ENCODE measurements at regions of chr7 and their contacts with region 1.

Region 1: GRCh38 chr7:883055-884021 is 7.0 kb downstream of the GET4 start:
- DNase-seq: peak; percentile 69
- ATAC-seq: peak; percentile 38

Region 2: GRCh38 chr7:964401-965231 is 81.3 kb after region 1 on chr7:
- intact Hi-C with region 1: loop called (anchors 5 kb)
- DNase-seq: no peak
- ATAC-seq: peak; percentile 64

Region 3: GRCh38 chr7:1028031-1028770 is 144.9 kb after region 1 on chr7:
- intact Hi-C with region 1: no loop called
- DNase-seq: peak; percentile 95
- ATAC-seq: peak; percentile 93

Region 4: DNA sequence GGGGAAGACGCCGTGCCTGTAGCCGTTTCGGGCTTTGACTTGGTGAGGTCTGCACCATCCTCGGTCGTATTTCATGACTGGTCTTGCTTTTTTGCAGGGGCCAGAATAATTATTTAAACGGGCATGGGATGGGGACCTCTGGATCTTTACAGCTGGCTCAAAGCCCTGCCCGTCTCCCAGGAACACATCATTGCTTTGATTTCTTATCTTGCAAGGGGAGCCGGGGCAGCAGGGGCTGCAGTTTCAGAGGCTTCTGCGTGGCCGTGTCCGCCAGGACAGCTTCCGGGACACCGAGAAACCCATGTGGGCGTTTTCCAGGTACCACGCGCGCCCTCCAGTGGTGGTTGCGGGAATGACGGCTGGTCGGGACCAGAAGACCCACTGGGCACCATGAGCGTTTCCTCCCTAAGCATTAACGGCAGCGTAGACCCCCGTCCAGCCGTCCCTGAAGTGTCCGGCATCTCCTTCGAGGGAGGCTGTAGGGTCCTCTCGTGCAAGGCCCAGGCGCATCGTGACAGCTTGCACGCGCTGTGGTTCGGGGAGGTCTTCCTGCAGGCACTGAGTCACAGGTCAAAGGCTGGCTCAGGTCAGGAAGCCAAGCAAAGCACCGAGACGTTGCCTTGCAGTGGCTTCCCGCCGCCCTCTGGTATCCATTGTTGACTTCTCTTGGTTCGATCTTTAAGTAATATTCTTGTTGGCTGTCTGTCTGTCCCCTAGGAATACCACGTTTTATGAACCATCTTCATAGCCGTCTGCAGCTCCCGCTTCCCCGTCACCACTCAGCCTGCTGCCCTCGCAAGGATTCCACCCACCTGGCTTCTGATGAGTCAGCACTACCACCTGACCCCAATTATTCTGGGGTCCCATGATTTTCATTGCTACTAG is 292.9 kb after region 1 on chr7:
- intact Hi-C with region 1: loop called (anchors 10 kb)
- DNase-seq: peak; percentile 92
- ATAC-seq: peak; percentile 76